GM12878 (cell line): ENCODE measurements at regions of chr6 and their contacts with region 1.

Region 1: GRCh38 chr6:45930420-45931040 is 85.1 kb downstream of the CLIC5 start:
- DNase-seq: no peak
- ATAC-seq: peak; percentile 84
- H3K4me3 ChIP-seq: no peak overlapping the region
- H3K27ac ChIP-seq: no peak overlapping the region
- H3K4me1 ChIP-seq: no peaks in the 10 kb centered on the region
- H3K27me3 ChIP-seq: peaks cover 1 to 3% of the 10 kb centered on the region in 2 experiments; a peak in 1 of 4 replicates
- CTCF ChIP-seq: peak; percentile 86 to 97 (median 96)
- EP300 ChIP-seq: no peak
- POLR2A ChIP-seq: no peak
- RAD21 ChIP-seq: peak; percentile 73

Region 2: GRCh38 chr6:45577836-45578504 is 352.6 kb before region 1 on chr6:
- CTCF ChIA-PET with region 1: no interaction called
- POLR2A ChIA-PET with region 1: no interaction called
- RAD21 ChIA-PET with region 1: no interaction called
- SMC1A ChIA-PET with region 1: no interaction called
- in situ Hi-C with region 1: no loop called
- intact Hi-C with region 1: no loop called
- DNase-seq: no peak
- ATAC-seq: no peak
- H3K4me3 ChIP-seq: no peak overlapping the region
- H3K27ac ChIP-seq: no peak overlapping the region
- H3K4me1 ChIP-seq: no peaks in the 10 kb centered on the region
- H3K27me3 ChIP-seq: peaks cover 0 to 6% of the 10 kb centered on the region in 2 experiments; a peak in 1 of 4 replicates
- CTCF ChIP-seq: no peak
- EP300 ChIP-seq: no peak
- POLR2A ChIP-seq: no peak
- RAD21 ChIP-seq: no peak

Region 3: GRCh38 chr6:46078294-46078693 is 147.8 kb after region 1 on chr6:
- CTCF ChIA-PET with region 1: interaction called, 3 read pairs
- POLR2A ChIA-PET with region 1: no interaction called
- RAD21 ChIA-PET with region 1: interaction called, 4 read pairs
- SMC1A ChIA-PET with region 1: no interaction called
- in situ Hi-C with region 1: no loop called
- intact Hi-C with region 1: loop called (anchors 10 kb)
- DNase-seq: no peak
- ATAC-seq: no peak
- H3K4me3 ChIP-seq: no peak overlapping the region
- H3K27ac ChIP-seq: no peak overlapping the region
- H3K4me1 ChIP-seq: no peaks in the 10 kb centered on the region
- H3K27me3 ChIP-seq: no peaks in the 10 kb centered on the region
- CTCF ChIP-seq: no peak
- EP300 ChIP-seq: no peak
- POLR2A ChIP-seq: no peak
- RAD21 ChIP-seq: no peak

Region 4: DNA sequence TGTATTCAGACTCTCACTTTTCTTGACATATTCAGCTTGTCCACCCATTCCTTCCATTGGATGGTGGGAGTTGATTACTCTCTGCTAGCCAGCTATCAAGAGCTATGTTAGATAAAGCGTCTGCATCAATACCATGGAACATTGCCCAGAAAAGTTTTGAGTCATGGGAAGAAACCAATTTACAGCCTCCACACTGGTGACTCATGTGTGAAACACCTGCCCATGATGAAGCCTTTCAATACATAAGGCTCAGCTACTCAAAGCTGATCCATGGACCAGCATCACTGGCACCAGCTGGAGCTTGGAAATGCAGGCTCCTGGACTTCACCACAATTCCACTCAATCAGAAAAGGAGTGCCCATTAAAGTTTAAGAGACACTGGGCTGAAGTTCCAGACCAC is 788.6 kb after region 1 on chr6:
- CTCF ChIA-PET with region 1: no interaction called
- POLR2A ChIA-PET with region 1: no interaction called
- RAD21 ChIA-PET with region 1: no interaction called
- SMC1A ChIA-PET with region 1: no interaction called
- in situ Hi-C with region 1: no loop called
- intact Hi-C with region 1: no loop called
- DNase-seq: no peak
- ATAC-seq: no peak
- H3K4me3 ChIP-seq: no peak overlapping the region
- H3K27ac ChIP-seq: no peak overlapping the region
- H3K4me1 ChIP-seq: no peaks in the 10 kb centered on the region
- H3K27me3 ChIP-seq: peaks cover 0 to 2% of the 10 kb centered on the region in 2 experiments; a peak in 2 of 4 replicates
- CTCF ChIP-seq: no peak
- EP300 ChIP-seq: no peak
- POLR2A ChIP-seq: no peak
- RAD21 ChIP-seq: no peak